ENCODE measurements at regions of chr10 and their contacts with region 1.

Region 1: DNA sequence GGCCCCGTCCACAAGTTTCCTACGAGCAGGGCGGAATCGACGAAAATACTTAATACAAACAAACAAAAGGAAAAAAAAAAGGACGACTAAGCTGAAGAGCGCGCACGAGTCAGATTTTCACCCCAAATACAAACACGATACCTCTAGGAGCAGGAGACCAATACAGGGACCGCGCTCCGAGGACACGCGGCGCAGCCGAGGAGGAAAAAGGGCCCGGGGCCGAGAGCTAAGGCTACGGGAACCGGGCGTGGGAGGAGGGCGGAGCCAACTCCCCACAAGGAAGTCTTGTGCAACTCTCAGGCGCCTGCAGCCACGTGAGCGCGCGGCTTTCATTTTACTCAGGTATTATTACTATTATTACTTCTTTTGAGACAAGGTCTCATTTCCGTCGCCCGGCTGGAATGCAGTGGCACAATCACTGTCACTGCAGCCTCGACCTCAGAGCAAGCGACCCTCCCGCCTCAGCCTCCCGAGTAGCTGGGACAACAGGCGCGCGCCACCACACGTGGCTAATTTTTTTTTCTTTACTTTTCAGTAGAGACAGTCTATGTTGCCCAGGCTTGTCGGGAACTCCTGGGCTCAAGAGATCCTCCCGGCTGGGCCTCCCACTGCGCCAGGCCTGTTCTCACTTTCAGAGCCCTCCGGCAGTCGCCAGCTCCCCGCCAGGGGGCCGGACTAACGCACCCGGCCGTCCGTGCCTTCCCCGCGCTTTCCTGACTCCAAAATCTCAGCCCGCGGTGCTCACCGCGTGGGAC is 1.2 kb downstream of the HNRNPF start:
- DNase-seq: peak; percentile 78 to 94
- ATAC-seq: peak; percentile 60 to 67
- H3K4me3 ChIP-seq: peak overlapping the region; percentile 96
- H3K27ac ChIP-seq: peak overlapping the region; percentile 95
- H3K4me1 ChIP-seq: peaks cover 41% of the 10 kb centered on the region
- CTCF ChIP-seq: peak; percentile 27; the same call in 2 of the 3 replicates
- EP300 ChIP-seq: no peak
- POLR2A ChIP-seq: peak; percentile 70
- RAD21 ChIP-seq: no peak

Region 2: DNA sequence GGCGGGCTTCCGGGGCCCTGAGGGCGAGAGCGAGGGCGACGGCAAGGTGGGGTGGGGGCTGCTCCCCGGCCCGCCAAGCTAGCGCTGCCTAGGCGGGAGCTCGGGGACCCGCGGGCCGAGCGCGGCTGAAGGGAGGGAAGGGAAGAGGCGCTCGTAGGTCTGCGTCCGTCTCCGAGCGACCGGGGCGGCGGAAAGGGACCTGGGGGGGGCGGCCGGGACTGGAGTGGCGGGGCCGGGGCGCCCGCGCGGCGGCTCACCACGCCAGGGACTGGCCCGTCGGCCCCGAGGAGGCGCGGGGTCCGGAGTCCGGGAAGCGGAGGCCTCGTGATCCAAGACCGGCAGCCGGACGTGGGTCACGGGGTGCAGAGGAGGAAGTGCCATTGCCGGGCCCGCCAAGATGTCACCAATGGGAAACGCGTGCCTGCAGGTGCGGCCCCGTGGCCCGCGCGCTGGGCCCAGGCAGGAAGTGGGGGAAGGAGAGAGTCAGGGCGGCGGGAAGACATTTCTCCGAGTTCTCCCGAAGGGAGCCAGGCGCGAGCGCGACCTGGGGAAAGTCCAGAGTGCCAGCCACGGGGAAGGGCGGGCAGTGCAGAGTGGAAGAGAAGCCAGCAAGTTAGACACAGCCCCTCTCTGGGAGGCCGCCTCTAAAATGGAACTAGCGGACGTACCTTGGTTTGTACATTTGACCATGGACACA is 10.7 kb before region 1 on chr10:
- CTCF ChIA-PET with region 1: interaction called, 6 read pairs
- POLR2A ChIA-PET with region 1: interaction called, 38 read pairs
- DNase-seq: peak; percentile 91 to 95
- ATAC-seq: peak; percentile 86
- H3K4me3 ChIP-seq: peak overlapping the region; percentile 65
- H3K27ac ChIP-seq: peak overlapping the region; percentile 86 to 97
- H3K4me1 ChIP-seq: peaks cover 74% of the 10 kb centered on the region
- CTCF ChIP-seq: no peak
- EP300 ChIP-seq: no peak
- POLR2A ChIP-seq: peak; percentile 19; the same call in 1 of the 2 replicates
- RAD21 ChIP-seq: no peak

Region 3: GRCh38 chr10:43420369-43421200 is 12.8 kb after region 1 on chr10:
- CTCF ChIA-PET with region 1: interaction called, 7 read pairs
- POLR2A ChIA-PET with region 1: interaction called, 28 read pairs
- DNase-seq: peak; percentile 49 to 82
- ATAC-seq: peak; percentile 94 to 95
- H3K4me3 ChIP-seq: peak overlapping the region; percentile 45
- H3K27ac ChIP-seq: peak overlapping the region; percentile 91 to 94
- H3K4me1 ChIP-seq: peaks cover 14% of the 10 kb centered on the region
- CTCF ChIP-seq: 0 out of 3 replicates have a peak, but pooled peaks have one; percentile 14
- EP300 ChIP-seq: no peak
- POLR2A ChIP-seq: peak; percentile 35; the same call in 1 of the 2 replicates
- RAD21 ChIP-seq: peak in 1 of 2 experiments; percentile 19; a peak in 1 of 5 replicates